IMR-90 (cell line): ENCODE measurements at regions of chr15 and their contacts with region 1.

Region 1: DNA sequence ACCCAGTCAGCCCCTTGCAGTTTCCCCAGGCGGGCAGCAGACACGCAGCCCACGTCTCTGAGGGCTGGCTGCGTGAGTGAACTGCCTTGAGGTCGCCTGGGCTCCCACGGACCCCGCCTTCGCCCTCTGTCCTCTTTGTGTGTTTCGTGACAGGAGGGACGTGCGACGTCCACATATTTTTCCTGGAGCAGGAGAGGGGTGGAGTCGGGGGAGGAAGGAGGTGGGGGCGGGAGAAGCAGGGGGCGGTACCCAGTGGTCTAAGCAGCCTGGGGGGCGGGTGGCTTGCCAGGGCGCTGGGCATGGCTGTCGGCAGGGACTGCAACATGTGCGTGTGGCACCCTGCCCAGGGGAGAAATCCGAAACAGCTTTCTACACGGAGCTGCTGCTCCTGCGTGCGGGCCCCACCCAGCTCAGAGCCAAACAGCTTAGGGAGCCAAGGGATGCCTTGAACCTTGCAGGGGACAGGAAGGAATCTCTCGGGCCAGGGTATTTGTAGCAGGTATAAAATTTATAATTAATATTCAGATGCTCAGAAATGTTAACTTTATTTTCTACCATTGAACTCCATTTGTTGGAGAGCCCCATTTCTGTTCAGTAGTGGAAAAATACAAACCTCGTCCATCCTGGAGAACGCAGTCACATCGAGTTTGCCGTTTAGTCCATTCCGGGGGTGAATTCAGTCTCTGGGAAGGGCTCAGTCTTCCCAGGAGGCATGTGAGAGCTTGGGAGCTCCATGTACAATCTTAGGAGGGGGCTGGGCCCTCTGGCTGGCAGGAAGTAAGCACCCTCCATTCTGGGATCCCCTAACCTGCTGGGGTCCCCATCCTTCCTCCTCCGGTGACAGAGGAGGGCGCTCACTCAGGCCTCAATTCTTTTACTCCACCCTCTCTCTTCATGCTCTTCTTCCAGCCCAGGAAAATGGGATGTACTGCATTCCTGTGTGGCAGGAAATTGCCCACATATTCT is 79.1 kb upstream of the MEF2A start:
- DNase-seq: peak; percentile 60
- ATAC-seq: peak; percentile 90
- H3K4me3 ChIP-seq: 0 out of 2 replicates have a peak overlapping the region, but pooled peaks have one; percentile 7
- H3K27ac ChIP-seq: peak overlapping the region; percentile 71
- H3K4me1 ChIP-seq: peaks cover 12% of the 10 kb centered on the region
- H3K27me3 ChIP-seq: no peaks in the 10 kb centered on the region
- CTCF ChIP-seq: no peak
- POLR2A ChIP-seq: no peak
- RAD21 ChIP-seq: no peak

Region 2: DNA sequence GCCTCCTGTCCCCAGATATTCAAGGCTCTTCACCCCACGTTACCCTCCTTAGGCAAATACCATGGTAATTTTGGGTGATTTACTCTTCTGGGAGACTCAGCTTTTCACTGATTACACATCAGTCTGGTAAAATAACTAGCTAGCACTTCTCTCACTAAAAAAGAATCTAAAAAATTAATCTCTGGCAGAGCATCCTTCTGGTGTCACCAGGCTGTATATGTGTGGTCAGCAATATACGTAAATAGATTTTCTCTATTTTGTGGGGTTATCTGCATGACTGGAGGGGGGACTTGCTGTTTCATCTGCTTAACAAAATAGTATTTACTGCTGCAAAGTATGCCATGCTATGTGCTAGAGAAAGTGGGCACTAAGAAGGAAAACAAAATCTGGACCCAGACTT is 190.3 kb before region 1 on chr15:
- CTCF ChIA-PET with region 1: no interaction called
- POLR2A ChIA-PET with region 1: no interaction called
- dilution Hi-C with region 1: no loop called
- in situ Hi-C with region 1: no loop called
- intact Hi-C with region 1: no loop called
- DNase-seq: no peak
- ATAC-seq: peak; percentile 49
- H3K4me3 ChIP-seq: no peak overlapping the region
- H3K27ac ChIP-seq: no peak overlapping the region
- H3K4me1 ChIP-seq: peaks cover 3% of the 10 kb centered on the region; the same call in 1 of the 2 replicates
- H3K27me3 ChIP-seq: no peaks in the 10 kb centered on the region
- CTCF ChIP-seq: no peak
- POLR2A ChIP-seq: no peak
- RAD21 ChIP-seq: no peak

Region 3: DNA sequence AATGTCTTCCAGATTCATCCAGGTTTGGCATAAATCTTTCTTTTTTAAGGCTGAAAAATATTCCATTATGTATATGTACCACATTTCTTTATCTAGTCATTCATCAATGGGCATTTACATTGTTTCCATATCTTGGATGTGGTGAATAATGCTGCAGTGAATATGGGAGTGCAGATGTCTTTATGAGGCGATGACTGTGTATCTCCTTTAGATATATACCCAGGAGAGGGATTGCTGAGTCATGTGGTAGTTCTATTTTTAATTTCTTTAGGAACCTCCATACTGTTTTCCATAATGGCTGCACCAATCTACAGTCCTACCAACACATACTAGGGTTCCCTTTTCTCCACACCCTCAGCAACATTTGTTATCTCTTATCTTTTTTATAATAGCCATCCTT is 139.1 kb before region 1 on chr15:
- CTCF ChIA-PET with region 1: no interaction called
- POLR2A ChIA-PET with region 1: no interaction called
- dilution Hi-C with region 1: no loop called
- in situ Hi-C with region 1: no loop called
- intact Hi-C with region 1: no loop called
- DNase-seq: peak; percentile 46
- ATAC-seq: no peak
- H3K4me3 ChIP-seq: no peak overlapping the region
- H3K27ac ChIP-seq: no peak overlapping the region
- H3K4me1 ChIP-seq: no peaks in the 10 kb centered on the region
- H3K27me3 ChIP-seq: no peaks in the 10 kb centered on the region
- CTCF ChIP-seq: no peak
- POLR2A ChIP-seq: no peak
- RAD21 ChIP-seq: no peak

Region 4: GRCh38 chr15:99421172-99421656 is 65.4 kb before region 1 on chr15:
- CTCF ChIA-PET with region 1: no interaction called
- POLR2A ChIA-PET with region 1: interaction called, 17 read pairs
- dilution Hi-C with region 1: no loop called
- in situ Hi-C with region 1: no loop called
- intact Hi-C with region 1: no loop called
- DNase-seq: peak; percentile 39
- ATAC-seq: peak; percentile 55
- H3K4me3 ChIP-seq: no peak overlapping the region
- H3K27ac ChIP-seq: peak overlapping the region; percentile 33; the same call in 1 of the 2 replicates
- H3K4me1 ChIP-seq: peaks cover 13% of the 10 kb centered on the region
- H3K27me3 ChIP-seq: no peaks in the 10 kb centered on the region
- CTCF ChIP-seq: no peak
- POLR2A ChIP-seq: no peak
- RAD21 ChIP-seq: no peak

Region 5: DNA sequence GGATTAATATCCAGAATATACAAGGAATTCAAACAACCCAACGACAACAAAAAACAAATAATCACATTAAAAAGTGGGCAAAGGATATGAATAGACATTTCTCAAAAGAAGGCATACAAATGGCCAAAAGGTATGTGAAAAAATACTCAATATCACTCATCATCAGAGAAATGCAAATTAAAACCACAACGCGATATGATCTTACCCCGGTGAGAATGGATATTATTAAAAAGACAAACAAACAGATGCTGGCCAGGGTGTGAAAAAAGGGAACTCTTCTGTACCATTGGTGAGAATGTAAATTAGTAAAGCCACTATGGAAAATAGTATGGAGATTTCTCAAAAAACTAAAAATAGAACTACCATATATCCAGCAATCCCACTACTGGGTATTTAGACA is 35.6 kb after region 1 on chr15:
- CTCF ChIA-PET with region 1: no interaction called
- POLR2A ChIA-PET with region 1: no interaction called
- dilution Hi-C with region 1: no loop called
- in situ Hi-C with region 1: no loop called
- intact Hi-C with region 1: no loop called
- DNase-seq: no peak
- ATAC-seq: no peak
- H3K4me3 ChIP-seq: no peak overlapping the region
- H3K27ac ChIP-seq: no peak overlapping the region
- H3K4me1 ChIP-seq: no peaks in the 10 kb centered on the region
- H3K27me3 ChIP-seq: peaks cover 3% of the 10 kb centered on the region; the same call in 1 of the 2 replicates
- CTCF ChIP-seq: no peak
- POLR2A ChIP-seq: no peak
- RAD21 ChIP-seq: no peak